Activated T-helper 1 cell treated with anti-CD3 and anti-CD28 coated beads, Interleukin-12 subunit alpha, Interleukin-12 subunit beta, Interleukin-2, Interleukin-4 antibody, amounts not matched to agents 30 ng/mL and 10 ng/mL and 1 ng/mL, durations not matched to agents 14 hours and 24 hours and 36 hours (primary cell): ENCODE measurements at regions of chr6 and their contacts with region 1.

Region 1: DNA sequence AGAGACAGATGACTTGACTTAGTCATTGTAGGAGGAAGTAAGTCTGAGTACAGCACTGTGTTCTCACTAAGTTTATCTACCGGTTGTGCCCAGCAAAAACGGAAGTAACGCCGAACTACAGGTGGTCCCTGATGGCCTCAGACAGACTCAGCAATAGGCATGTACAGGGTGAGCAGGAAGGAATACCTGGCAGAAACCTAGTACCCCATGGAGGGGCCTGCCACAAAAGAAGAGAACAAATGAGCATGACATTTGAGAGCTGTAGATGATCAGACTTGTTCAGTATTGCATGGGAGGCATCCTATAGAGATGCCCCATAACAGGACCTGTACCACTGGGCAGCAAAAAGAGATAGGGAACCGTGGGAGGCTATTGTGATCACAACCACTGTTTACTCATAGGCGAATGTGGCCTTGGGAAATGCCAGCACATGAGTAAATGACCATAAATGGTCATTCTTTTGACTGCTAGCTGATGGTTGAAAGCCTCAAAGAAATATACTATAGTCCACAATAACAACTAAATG is 106.4 kb upstream of the TAB2 start:
- DNase-seq: no peak
- H3K4me3 Mint-ChIP-seq: no peak overlapping the region
- H3K27ac Mint-ChIP-seq: no peak overlapping the region
- H3K4me1 Mint-ChIP-seq: peaks cover 4% of the 10 kb centered on the region
- H3K27me3 Mint-ChIP-seq: no peaks in the 10 kb centered on the region

Region 2: GRCh38 chr6:148760568-148761526 is 450.3 kb before region 1 on chr6:
- intact Hi-C with region 1: loop called (anchors 2 kb)
- DNase-seq: no peak
- H3K4me3 Mint-ChIP-seq: peak overlapping the region; percentile 11
- H3K27ac Mint-ChIP-seq: peak overlapping the region; percentile 54
- H3K4me1 Mint-ChIP-seq: peaks cover 30% of the 10 kb centered on the region
- H3K27me3 Mint-ChIP-seq: peaks cover 57% of the 10 kb centered on the region

Region 3: GRCh38 chr6:148800535-148800934 is 410.6 kb before region 1 on chr6:
- intact Hi-C with region 1: no loop called
- DNase-seq: no peak
- H3K4me3 Mint-ChIP-seq: no peak overlapping the region
- H3K27ac Mint-ChIP-seq: no peak overlapping the region
- H3K4me1 Mint-ChIP-seq: no peaks in the 10 kb centered on the region
- H3K27me3 Mint-ChIP-seq: peaks cover 19% of the 10 kb centered on the region

Region 4: DNA sequence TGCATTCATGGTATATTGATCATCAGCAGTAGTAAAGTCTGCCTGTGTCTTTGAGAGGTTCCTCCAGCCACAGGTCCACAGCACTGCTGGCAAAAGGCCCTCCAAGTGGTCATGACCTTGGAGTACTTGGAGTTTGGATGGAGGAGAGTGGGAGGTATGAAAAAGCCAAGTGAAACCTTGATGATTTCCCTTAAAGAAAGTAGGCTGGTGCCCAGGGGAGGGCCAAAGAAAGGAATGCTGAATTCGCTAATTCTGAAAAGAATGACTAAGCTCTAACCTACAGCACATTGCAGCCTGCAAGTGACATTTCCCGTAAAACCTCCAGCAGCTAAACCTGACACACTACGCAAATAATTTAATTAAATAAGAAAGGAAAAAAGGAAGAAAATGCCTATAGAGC is 117.0 kb before region 1 on chr6:
- intact Hi-C with region 1: loop called (anchors 1 kb)
- DNase-seq: no peak
- H3K4me3 Mint-ChIP-seq: peak overlapping the region; percentile 64
- H3K27ac Mint-ChIP-seq: peak overlapping the region; percentile 88
- H3K4me1 Mint-ChIP-seq: peaks cover 78% of the 10 kb centered on the region
- H3K27me3 Mint-ChIP-seq: no peaks in the 10 kb centered on the region

Region 5: GRCh38 chr6:149129371-149130077 is 81.6 kb before region 1 on chr6:
- intact Hi-C with region 1: no loop called
- DNase-seq: no peak
- H3K4me3 Mint-ChIP-seq: no peak overlapping the region
- H3K27ac Mint-ChIP-seq: peak overlapping the region; percentile 92
- H3K4me1 Mint-ChIP-seq: peaks cover 4% of the 10 kb centered on the region
- H3K27me3 Mint-ChIP-seq: no peaks in the 10 kb centered on the region

Region 6: DNA sequence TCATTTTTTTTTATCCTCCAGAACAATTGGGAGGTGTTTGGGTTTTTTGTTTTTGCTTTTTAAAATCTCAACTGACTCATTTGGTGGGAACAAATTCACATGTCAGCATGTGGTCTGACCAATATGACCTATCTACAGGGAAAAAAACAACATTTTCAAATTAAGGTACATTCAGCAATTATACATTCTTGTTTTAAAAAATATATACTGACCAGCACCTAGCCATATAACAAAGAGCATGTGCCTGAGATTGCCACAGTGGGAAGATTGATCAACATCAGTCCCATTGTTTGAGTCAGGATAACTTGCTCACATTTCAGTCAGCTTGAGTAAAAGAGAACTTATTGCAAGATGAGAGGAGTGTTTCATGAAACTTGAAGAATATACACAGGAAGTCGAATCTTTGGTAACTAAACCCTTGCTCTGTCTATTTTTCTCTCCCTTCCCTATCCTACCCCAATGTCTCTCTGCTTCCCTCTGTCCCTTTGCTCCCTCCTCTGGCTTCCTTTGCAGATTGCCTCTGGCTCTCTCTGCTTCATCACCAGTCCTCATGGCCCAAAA is 56.8 kb before region 1 on chr6:
- intact Hi-C with region 1: loop called (anchors 1 kb)
- DNase-seq: no peak
- H3K4me3 Mint-ChIP-seq: peak overlapping the region; percentile 21
- H3K27ac Mint-ChIP-seq: peak overlapping the region; percentile 99
- H3K4me1 Mint-ChIP-seq: peaks cover 84% of the 10 kb centered on the region
- H3K27me3 Mint-ChIP-seq: no peaks in the 10 kb centered on the region

Region 7: GRCh38 chr6:149271348-149272340 is 60.5 kb after region 1 on chr6:
- intact Hi-C with region 1: loop called (anchors 1 kb)
- DNase-seq: no peak
- H3K4me3 Mint-ChIP-seq: peak overlapping the region; percentile 62
- H3K27ac Mint-ChIP-seq: peak overlapping the region; percentile 94
- H3K4me1 Mint-ChIP-seq: peaks cover 56% of the 10 kb centered on the region
- H3K27me3 Mint-ChIP-seq: no peaks in the 10 kb centered on the region

Region 8: DNA sequence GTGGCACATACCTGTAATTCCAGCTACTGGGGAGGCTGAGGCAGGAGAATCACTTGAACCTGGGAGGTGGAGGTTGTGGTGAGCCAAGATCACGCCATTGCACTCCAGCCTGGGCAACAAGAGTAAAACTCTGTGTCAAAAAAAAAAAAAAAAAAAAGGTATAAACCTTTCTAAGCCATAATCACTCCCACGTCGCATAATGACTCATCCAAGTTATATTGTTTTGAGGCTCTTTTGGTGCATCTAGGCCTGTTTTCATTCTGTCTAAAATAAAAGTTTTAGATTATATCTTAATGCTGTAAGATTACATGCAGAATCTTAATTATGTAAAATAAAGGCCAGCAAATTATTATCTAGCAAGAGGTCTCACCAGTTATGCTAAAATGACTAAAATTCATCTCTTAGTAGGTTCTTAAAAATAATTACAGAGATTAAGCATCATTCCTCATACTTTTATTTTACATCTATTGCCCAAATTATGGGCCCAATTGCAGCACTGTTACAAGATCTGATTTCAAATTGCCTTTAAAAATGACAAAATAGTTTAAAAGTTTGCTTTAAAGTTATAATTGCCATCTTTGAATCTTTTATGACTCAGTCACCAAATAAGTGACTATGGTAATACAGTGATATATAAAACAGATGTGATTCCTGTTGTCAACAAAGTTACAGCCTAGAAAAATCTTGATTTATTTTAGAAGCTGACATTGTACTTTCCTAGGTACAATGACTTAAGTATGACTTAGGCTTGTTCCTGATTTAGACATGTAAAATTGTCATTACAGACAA is 178.6 kb after region 1 on chr6:
- intact Hi-C with region 1: loop called (anchors 2 kb)
- DNase-seq: no peak
- H3K4me3 Mint-ChIP-seq: no peak overlapping the region
- H3K27ac Mint-ChIP-seq: peak overlapping the region; percentile 45
- H3K4me1 Mint-ChIP-seq: peaks cover 82% of the 10 kb centered on the region
- H3K27me3 Mint-ChIP-seq: no peaks in the 10 kb centered on the region

Region 9: DNA sequence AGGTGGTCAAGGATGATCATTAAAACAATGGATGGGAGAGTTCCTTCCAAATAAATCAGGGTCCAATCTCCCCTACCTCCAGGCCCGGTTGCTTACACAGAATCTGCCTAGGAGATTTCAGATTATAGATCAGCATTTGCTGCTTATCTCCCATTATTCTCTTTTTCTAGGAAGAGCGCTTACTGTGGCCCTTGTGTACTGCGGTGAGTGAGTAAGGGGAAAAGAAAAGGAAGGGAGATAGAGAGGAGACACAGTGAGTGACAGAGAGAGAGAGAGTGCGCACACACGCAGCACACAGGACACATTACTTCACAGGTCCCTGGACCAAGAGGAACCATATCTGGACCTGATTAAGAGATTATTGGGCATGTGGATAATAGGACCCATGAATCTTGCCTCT is 500.6 kb after region 1 on chr6:
- intact Hi-C with region 1: no loop called
- DNase-seq: no peak
- H3K4me3 Mint-ChIP-seq: no peak overlapping the region
- H3K27ac Mint-ChIP-seq: no peak overlapping the region
- H3K4me1 Mint-ChIP-seq: peaks cover 42% of the 10 kb centered on the region
- H3K27me3 Mint-ChIP-seq: no peaks in the 10 kb centered on the region